Cardiac septum (tissue), 1 donor: ENCODE measurements at regions of chr12 and their contacts with region 1.

Region 1: GRCh38 chr12:76018111-76018510 is 13.5 kb downstream of the PHLDA1 start:
- DNase-seq: no peak

Region 2: GRCh38 chr12:75977952-75978671 is 40.0 kb before region 1 on chr12:
- intact Hi-C with region 1: loop called (anchors 5 kb)
- DNase-seq: peak; percentile 79

Region 3: DNA sequence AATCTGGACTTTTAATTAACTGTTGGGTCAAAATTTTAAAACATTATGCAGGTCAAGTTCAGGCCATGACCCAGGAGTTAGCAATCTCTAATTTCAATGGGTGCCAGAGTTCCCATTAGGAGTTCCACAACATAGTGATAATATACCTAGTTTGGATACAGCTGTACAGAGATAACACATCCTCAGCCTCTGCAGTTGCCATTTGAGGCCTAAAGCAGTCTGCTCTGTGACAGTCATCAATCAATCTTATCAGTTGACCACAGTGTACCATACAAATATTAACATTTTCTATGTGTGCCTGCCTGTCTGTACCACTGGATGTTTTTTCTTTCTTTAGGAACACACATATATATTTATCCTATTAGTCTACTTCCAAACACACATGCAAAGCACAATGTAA is 384.1 kb after region 1 on chr12:
- intact Hi-C with region 1: no loop called
- DNase-seq: no peak